ENCODE measurements at regions of chr12 and their contacts with region 1.

Region 1: GRCh38 chr12:32947206-32948067 is 50.9 kb upstream of the PKP2 start:
- DNase-seq: peak; percentile 3
- ATAC-seq: no peak
- H3K4me3 ChIP-seq: no peak overlapping the region
- H3K27ac ChIP-seq: no peak overlapping the region
- H3K4me1 ChIP-seq: no peaks in the 10 kb centered on the region
- H3K27me3 ChIP-seq: 0 out of 2 replicates have a peak, but pooled peaks cover 8% of the 10 kb centered on the region
- CTCF ChIP-seq: peak in 2 of 3 experiments; percentile 15 to 41; a peak in 1 of 6 replicates
- POLR2A ChIP-seq: no peak
- RAD21 ChIP-seq: peak; percentile 51

Region 2: DNA sequence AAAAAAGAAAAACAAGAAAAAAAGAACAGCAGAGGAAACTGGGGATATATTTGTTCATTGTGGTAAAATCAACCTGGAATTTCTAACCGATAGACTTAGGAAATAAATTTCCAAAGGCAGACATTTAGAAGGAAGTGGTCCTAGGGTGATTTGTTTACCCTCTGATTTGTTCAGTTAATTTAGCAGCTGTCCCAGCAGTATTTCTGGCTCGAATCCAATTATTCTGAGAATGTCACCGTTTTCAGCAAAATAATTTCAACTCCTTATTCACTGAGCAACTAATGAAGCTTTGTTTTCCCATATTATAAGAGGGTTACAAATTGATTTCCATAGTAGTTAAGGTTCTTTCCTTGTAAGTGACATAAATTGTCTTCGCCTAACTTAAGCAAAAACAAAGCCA is 777.4 kb after region 1 on chr12:
- CTCF ChIA-PET with region 1: no interaction called
- POLR2A ChIA-PET with region 1: no interaction called
- RAD21 ChIA-PET with region 1: no interaction called
- intact Hi-C with region 1: no loop called
- DNase-seq: no peak
- ATAC-seq: no peak
- H3K4me3 ChIP-seq: no peak overlapping the region
- H3K27ac ChIP-seq: no peak overlapping the region
- H3K4me1 ChIP-seq: no peaks in the 10 kb centered on the region
- H3K27me3 ChIP-seq: no peaks in the 10 kb centered on the region
- CTCF ChIP-seq: no peak
- POLR2A ChIP-seq: no peak
- RAD21 ChIP-seq: no peak

Region 3: GRCh38 chr12:34016361-34016760 is 1068.9 kb after region 1 on chr12:
- CTCF ChIA-PET with region 1: interaction called, 6 read pairs
- POLR2A ChIA-PET with region 1: no interaction called
- RAD21 ChIA-PET with region 1: no interaction called
- intact Hi-C with region 1: loop called (anchors 2 kb)
- DNase-seq: no peak
- ATAC-seq: peak; percentile 78
- H3K4me3 ChIP-seq: no peak overlapping the region
- H3K27ac ChIP-seq: no peak overlapping the region
- H3K4me1 ChIP-seq: no peaks in the 10 kb centered on the region
- H3K27me3 ChIP-seq: no peaks in the 10 kb centered on the region
- CTCF ChIP-seq: peak in 2 of 3 experiments; percentile 29 to 38; a peak in 3 of 6 replicates
- POLR2A ChIP-seq: no peak
- RAD21 ChIP-seq: no peak

Region 4: DNA sequence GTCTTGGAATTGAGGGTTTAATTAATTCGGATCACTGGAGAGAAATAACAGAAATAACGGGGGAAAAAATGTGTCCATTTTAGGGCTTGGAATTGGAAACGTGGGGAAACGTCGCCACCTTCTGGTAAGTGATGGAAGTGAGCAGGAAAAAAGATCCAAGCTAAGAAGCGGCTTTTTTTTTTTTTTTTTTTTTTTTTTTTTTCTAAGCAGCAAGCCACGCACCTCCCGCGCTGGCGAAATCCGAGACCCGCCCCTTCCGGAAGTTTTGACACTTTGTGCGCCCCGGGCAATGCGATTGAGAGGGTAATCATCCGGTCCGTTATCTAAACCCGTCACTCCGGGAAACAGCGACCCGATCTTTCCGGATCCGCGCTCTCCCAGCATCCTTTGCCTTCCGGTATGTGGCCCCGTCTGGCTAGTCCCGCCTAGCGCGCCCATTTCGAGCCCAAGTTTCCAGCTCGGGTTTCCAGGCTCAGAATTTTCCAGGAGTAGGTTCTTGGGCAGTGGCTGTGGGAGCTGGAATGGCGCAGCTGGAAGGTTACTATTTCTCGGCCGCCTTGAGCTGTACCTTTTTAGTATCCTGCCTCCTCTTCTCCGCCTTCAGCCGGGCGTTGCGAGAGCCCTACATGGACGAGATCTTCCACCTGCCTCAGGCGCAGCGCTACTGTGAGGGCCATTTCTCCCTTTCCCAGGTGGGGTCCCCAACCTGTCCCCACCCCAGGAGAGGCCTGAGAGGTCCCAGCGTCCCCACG is 1074.8 kb after region 1 on chr12 and contains the start of gene ALG10:
- CTCF ChIA-PET with region 1: interaction called, 12 read pairs
- POLR2A ChIA-PET with region 1: no interaction called
- RAD21 ChIA-PET with region 1: interaction called in 1 of 2 experiments, 3 read pairs
- intact Hi-C with region 1: loop called (anchors 2 kb)
- DNase-seq: peak; percentile 93
- ATAC-seq: peak; percentile 100
- H3K4me3 ChIP-seq: peak within 1 kb of the TSS; percentile 79 to 87
- H3K27ac ChIP-seq: peak within 1 kb of the TSS; percentile 49
- H3K4me1 ChIP-seq: peaks cover 0 to 8% of the 10 kb centered on the region in 2 experiments; a peak in 2 of 4 replicates
- H3K27me3 ChIP-seq: no peaks in the 10 kb centered on the region
- CTCF ChIP-seq: peak; percentile 57 to 67 (median 62)
- POLR2A ChIP-seq: no peak
- RAD21 ChIP-seq: peak; percentile 86
- total RNA-seq, gene ALG10: 9.6 TPM